ENCODE measurements at regions of chrX and their contacts with region 1.

Region 1: DNA sequence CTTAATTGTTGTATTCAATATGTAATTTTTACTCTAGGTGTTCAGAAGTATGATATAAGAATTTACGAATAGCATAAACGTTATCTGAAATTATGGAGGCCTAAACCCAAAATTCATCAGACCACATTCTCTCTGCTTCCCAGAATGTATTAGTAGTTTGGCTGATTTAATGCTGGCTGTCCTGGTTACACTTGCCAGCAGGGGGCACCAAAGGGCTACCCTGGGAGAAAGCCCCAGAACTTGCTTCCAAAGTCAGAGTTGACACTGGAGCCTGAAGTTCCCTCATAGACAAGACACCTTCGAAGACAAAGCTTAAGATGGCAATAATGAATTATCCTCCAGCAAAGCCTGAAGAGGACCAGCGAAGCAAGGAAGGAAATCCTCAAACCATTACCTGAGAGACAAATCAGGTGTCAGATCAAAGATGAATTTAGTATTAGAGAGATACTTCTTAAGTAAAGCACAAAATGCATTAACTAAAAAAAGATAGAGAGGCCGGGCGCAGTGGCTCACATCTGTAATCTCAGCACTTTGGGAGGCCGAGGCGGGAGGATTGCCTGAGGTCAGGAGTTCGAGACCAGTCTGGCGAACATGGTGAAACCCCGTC is 11.3 kb upstream of the ANOS1 start:
- DNase-seq: peak; percentile 31
- ATAC-seq: no peak; the same call in 1 of the 2 replicates
- H3K4me3 ChIP-seq: no peak overlapping the region
- H3K27ac ChIP-seq: no peak overlapping the region
- H3K4me1 ChIP-seq: no peaks in the 10 kb centered on the region
- H3K27me3 ChIP-seq: no peaks in the 10 kb centered on the region
- CTCF ChIP-seq: peak; percentile 63
- POLR2A ChIP-seq: no peak
- RAD21 ChIP-seq: peak; percentile 48

Region 2: GRCh38 chrX:7996414-7996813 is 746.8 kb before region 1 on chrX:
- CTCF ChIA-PET with region 1: no interaction called
- POLR2A ChIA-PET with region 1: no interaction called
- dilution Hi-C with region 1: no loop called
- in situ Hi-C with region 1: loop called (anchors 10 kb)
- intact Hi-C with region 1: loop called (anchors 1 kb)
- DNase-seq: peak; percentile 40
- ATAC-seq: peak; percentile 60
- H3K4me3 ChIP-seq: no peak overlapping the region
- H3K27ac ChIP-seq: no peak overlapping the region
- H3K4me1 ChIP-seq: no peaks in the 10 kb centered on the region
- H3K27me3 ChIP-seq: no peaks in the 10 kb centered on the region
- CTCF ChIP-seq: peak; percentile 58
- POLR2A ChIP-seq: no peak
- RAD21 ChIP-seq: peak; percentile 60

Region 3: GRCh38 chrX:8704184-8704583 is 39.0 kb before region 1 on chrX:
- CTCF ChIA-PET with region 1: no interaction called
- POLR2A ChIA-PET with region 1: no interaction called
- dilution Hi-C with region 1: no loop called
- in situ Hi-C with region 1: no loop called
- intact Hi-C with region 1: no loop called
- DNase-seq: no peak
- ATAC-seq: no peak
- H3K4me3 ChIP-seq: no peak overlapping the region
- H3K27ac ChIP-seq: no peak overlapping the region
- H3K4me1 ChIP-seq: no peaks in the 10 kb centered on the region
- H3K27me3 ChIP-seq: no peaks in the 10 kb centered on the region
- CTCF ChIP-seq: no peak
- POLR2A ChIP-seq: no peak
- RAD21 ChIP-seq: no peak

Region 4: GRCh38 chrX:8803326-8803725 is 60.1 kb after region 1 on chrX:
- CTCF ChIA-PET with region 1: no interaction called
- POLR2A ChIA-PET with region 1: no interaction called
- dilution Hi-C with region 1: no loop called
- in situ Hi-C with region 1: no loop called
- intact Hi-C with region 1: no loop called
- DNase-seq: no peak
- ATAC-seq: no peak
- H3K4me3 ChIP-seq: no peak overlapping the region
- H3K27ac ChIP-seq: no peak overlapping the region
- H3K4me1 ChIP-seq: no peaks in the 10 kb centered on the region
- H3K27me3 ChIP-seq: peaks cover 2% of the 10 kb centered on the region; the same call in 1 of the 2 replicates
- CTCF ChIP-seq: no peak
- POLR2A ChIP-seq: no peak
- RAD21 ChIP-seq: no peak

Region 5: GRCh38 chrX:9003041-9003440 is 259.8 kb after region 1 on chrX:
- CTCF ChIA-PET with region 1: no interaction called
- POLR2A ChIA-PET with region 1: no interaction called
- dilution Hi-C with region 1: no loop called
- in situ Hi-C with region 1: no loop called
- intact Hi-C with region 1: no loop called
- DNase-seq: no peak
- ATAC-seq: no peak
- H3K4me3 ChIP-seq: no peak overlapping the region
- H3K27ac ChIP-seq: no peak overlapping the region
- H3K4me1 ChIP-seq: no peaks in the 10 kb centered on the region
- H3K27me3 ChIP-seq: no peaks in the 10 kb centered on the region
- CTCF ChIP-seq: no peak
- POLR2A ChIP-seq: no peak
- RAD21 ChIP-seq: no peak

Region 6: GRCh38 chrX:9708904-9709553 is 965.8 kb after region 1 on chrX:
- CTCF ChIA-PET with region 1: no interaction called
- POLR2A ChIA-PET with region 1: no interaction called
- dilution Hi-C with region 1: no loop called
- in situ Hi-C with region 1: no loop called
- intact Hi-C with region 1: loop called (anchors 10 kb)
- DNase-seq: peak; percentile 55
- ATAC-seq: peak; percentile 91
- H3K4me3 ChIP-seq: no peak overlapping the region
- H3K27ac ChIP-seq: no peak overlapping the region
- H3K4me1 ChIP-seq: no peaks in the 10 kb centered on the region
- H3K27me3 ChIP-seq: no peaks in the 10 kb centered on the region
- CTCF ChIP-seq: peak; percentile 78
- POLR2A ChIP-seq: no peak
- RAD21 ChIP-seq: peak; percentile 84

Measured in IMR-90 (cell line).